Breast epithelium (tissue), 4 donors: ENCODE measurements at regions of chr11 and their contacts with region 1.

Region 1: DNA sequence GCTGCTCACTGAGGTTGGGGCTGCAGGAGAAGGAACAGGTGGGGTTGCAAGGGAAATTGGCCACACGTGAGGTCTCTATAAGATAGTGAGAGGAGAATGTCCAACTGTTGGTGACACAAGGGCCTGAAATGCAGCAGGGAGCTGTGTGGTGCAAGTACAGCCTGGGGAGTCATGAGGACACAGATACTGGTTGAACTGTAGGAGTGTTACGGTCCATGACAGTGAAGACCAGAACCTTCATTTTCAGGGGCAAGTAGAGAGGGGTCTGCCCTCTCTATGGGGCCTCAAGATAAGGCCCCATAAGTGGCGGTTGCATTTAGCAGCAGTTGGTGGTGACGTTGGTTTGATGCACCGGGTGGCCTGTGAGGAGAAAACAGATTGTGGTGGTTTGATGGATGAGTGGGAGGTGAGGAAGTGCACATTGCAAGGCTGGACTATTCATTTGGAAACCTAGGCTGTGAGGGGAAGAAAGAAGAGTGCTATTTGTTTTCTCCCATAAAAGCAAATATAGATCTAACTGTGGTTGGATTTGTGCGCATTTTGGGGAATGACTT is 39.4 kb downstream of the MICAL2 start:
- DNase-seq: no peak
- H3K4me3 ChIP-seq: no peak overlapping the region
- H3K27ac ChIP-seq: no peak overlapping the region
- H3K4me1 ChIP-seq: no peaks in the 10 kb centered on the region
- H3K27me3 ChIP-seq: no peaks in the 10 kb centered on the region
- CTCF ChIP-seq: no peak
- POLR2A ChIP-seq: no peak

Region 2: DNA sequence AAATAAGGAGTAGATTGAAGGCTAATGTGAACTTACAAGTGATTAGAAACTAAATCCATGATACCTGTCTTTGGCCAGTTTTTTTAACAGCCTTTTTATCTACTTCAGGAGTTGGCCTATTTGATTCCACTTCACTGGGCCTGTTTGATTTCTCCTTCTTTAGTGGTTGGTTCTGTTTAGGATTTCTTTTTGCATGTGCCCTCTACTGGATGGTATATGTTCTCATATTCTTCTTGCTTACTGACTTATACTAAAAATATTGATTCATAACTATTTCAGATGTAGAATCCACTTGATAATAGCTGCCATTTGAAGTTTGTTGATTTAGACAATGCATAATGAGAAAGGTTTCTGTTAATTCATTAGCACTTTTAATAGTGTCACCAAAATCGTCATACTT is 254.1 kb before region 1 on chr11:
- intact Hi-C with region 1: no loop called
- DNase-seq: no peak
- H3K4me3 ChIP-seq: no peak overlapping the region
- H3K27ac ChIP-seq: no peak overlapping the region
- H3K4me1 ChIP-seq: no peaks in the 10 kb centered on the region
- H3K27me3 ChIP-seq: no peaks in the 10 kb centered on the region
- CTCF ChIP-seq: no peak
- POLR2A ChIP-seq: no peak

Region 3: DNA sequence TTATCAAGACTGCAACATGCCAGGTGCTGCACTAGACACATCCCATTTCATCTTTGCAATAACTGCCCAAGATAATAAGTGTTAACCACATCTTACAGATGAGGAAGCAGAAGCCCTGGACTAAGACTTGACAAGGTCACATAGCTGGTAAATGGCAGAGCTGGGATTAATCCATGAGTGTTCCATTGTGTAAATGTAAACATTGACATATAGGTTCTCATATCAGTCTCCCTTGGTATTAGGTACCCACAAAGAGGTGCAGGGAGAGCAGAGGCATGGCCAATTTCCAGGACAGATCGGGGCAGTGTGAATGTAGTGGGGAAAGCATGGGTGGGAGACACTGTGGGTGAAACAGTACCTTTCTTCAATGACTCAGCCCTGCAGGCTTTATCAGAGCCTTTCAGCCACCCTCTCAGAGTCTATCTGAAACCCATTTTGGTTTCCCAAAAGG is 21.4 kb before region 1 on chr11:
- intact Hi-C with region 1: loop called (anchors 2 kb)
- DNase-seq: no peak
- H3K4me3 ChIP-seq: no peak overlapping the region
- H3K27ac ChIP-seq: no peak overlapping the region
- H3K4me1 ChIP-seq: no peaks in the 10 kb centered on the region
- H3K27me3 ChIP-seq: no peaks in the 10 kb centered on the region
- CTCF ChIP-seq: no peak
- POLR2A ChIP-seq: no peak